ENCODE measurements at regions of chr2 and their contacts with region 1.

Region 1: DNA sequence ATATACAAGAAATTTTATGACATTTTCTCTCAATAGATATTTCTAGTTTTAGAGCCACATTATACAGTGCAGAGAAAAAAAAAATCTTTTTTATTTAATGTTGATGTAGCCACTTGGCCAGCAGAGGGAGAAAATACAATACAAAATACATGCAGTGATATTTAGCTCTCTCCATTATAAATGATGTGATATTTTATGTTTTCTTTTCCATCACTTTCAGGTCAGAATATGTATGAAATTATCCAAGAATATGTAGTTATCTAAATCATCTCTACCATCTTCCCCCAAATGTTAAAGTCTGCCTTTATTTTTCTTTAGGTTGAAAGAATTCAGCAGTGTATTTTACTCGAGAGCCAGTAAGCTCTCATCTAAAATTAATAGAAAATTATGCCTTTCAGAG is 533.6 kb upstream of the FSHR start:
- DNase-seq: no peak
- H3K4me3 ChIP-seq: no peak overlapping the region
- H3K27ac ChIP-seq: no peak overlapping the region
- H3K4me1 ChIP-seq: no peaks in the 10 kb centered on the region
- H3K27me3 ChIP-seq: no peaks in the 10 kb centered on the region
- CTCF ChIP-seq: peak; percentile 35 to 50 (median 44)
- EP300 ChIP-seq: no peak
- POLR2A ChIP-seq: no peak

Region 2: DNA sequence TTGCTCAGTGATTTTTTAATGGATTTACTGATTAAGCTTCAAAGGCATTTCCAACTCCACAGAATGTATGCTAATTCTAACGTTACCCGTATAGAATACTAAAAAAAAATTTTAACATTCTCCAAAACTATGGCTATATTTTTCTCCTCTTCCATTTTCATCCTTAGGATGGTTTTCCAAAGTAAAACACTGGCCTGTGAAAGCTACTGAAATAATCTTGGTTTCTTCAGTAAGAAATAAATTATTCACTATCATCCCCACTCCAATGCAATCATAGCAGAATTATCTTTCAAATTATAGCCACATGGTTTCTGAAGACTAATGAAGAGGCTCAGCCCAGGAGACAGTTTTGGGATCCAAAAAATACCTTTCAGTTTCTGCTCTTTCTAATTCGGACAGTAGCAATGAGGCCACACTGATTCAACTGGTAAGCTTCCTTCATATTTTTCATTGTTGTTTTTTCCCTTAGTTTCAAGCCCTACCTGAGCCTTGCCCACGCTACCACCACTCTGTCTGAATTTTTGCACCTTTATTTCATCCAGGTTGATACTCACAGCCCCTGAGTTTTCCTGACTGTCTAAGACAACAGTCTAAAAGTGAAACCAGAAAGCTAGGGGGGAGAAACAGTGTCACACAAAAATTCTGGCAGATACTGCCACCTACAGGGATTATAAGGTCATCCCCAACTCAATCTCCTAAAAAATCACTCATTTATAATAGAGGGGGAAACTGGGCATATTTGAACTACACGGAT is 456.1 kb after region 1 on chr2:
- intact Hi-C with region 1: loop called (anchors 5 kb)
- DNase-seq: no peak
- H3K4me3 ChIP-seq: peak overlapping the region; percentile 35 to 53 (median 46)
- H3K27ac ChIP-seq: peak overlapping the region; percentile 22 to 54 (median 46)
- H3K4me1 ChIP-seq: peaks cover 0 to 9% (median 9%) of the 10 kb centered on the region in 4 donors
- H3K27me3 ChIP-seq: no peaks in the 10 kb centered on the region
- CTCF ChIP-seq: peak; percentile 58 to 65 (median 64)
- EP300 ChIP-seq: no peak
- POLR2A ChIP-seq: no peak

Region 3: DNA sequence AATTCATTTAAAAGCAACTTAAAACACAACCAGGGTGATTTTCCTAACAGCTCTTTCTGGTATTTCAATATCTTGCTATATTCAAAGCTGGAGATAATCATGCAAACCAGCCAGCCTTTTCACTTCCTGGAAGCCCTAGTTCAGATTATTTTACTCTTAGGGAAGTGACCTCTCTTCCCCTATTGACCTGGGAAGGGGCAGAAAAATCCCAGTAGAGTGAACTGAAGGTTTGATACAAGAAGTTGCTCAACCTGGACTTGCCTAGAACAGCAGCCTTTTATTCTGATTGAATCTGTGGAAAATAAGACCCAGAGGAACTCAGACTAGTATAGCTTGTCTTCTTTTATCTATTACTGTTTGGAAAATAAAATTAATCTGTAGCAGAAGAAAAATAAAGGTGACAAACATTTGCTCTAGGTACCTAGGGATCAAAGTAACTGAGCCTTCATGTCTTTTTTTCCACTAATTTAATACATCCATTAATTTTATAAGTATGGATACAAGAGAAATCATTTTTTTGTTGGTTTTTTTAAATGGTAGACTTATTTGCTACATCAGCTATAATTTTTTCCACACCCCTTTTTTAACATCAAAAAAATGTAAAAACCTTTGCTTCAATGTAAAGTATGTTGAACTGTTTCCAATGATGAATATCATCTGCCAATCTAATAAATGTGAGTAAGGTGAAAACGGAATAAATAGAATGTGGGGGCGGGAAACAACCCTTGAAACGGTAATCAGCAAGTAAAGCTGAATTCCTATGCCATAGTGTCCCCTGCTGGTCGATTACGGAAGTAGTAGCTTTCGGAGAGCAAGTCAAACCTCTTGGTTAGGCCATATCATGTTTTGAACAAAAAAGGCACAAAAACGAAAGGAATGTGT is 714.1 kb after region 1 on chr2:
- intact Hi-C with region 1: loop called (anchors 10 kb)
- DNase-seq: no peak
- H3K4me3 ChIP-seq: no peak overlapping the region
- H3K27ac ChIP-seq: no peak overlapping the region
- H3K4me1 ChIP-seq: peaks cover 0 to 4% (median 0%) of the 10 kb centered on the region in 4 donors
- H3K27me3 ChIP-seq: no peaks in the 10 kb centered on the region
- CTCF ChIP-seq: peak; percentile 63 to 82 (median 79)
- EP300 ChIP-seq: no peak
- POLR2A ChIP-seq: no peak

Measured in esophagus muscularis mucosa (tissue), 4 donors.